Activated CD4-positive, alpha-beta memory T cell treated with anti-CD3 and anti-CD28 coated beads for 36 hours (primary cell): ENCODE measurements at regions of chr14 and their contacts with region 1.

Region 1: GRCh38 chr14:71403656-71404055 is 496.4 kb downstream of the PCNX1 start:
- DNase-seq: peak; percentile 35
- H3K4me3 Mint-ChIP-seq: no peak overlapping the region
- H3K27ac Mint-ChIP-seq: no peak overlapping the region
- H3K4me1 Mint-ChIP-seq: peaks cover 35% of the 10 kb centered on the region
- H3K27me3 Mint-ChIP-seq: no peaks in the 10 kb centered on the region

Region 2: DNA sequence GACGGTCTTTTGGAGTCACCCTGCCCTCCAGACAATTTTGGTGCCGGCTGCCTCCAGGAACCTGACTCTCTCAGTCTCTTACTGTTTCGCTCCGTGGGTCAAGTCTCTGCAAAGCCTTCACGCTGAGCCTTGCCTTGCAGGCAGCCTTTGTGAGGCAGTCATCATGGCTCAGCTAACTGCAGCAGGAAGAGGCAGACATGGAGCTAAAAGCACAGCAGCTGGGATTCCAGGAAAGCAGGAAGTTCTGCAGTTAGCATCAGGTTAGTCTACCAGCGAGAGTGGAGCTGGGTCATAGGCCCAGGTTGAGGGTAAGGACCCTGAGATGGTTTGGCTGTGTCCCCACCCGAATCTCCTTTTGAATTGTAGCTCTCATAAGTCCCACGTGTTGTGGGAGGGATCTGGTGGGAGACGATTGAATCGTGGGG is 191.0 kb before region 1 on chr14:
- CTCF ChIA-PET with region 1: no interaction called
- POLR2A ChIA-PET with region 1: no interaction called
- intact Hi-C with region 1: loop called (anchors 5 kb)
- DNase-seq: no peak
- H3K4me3 Mint-ChIP-seq: no peak overlapping the region
- H3K27ac Mint-ChIP-seq: no peak overlapping the region
- H3K4me1 Mint-ChIP-seq: peaks cover 14% of the 10 kb centered on the region
- H3K27me3 Mint-ChIP-seq: peaks cover 1% of the 10 kb centered on the region

Region 3: GRCh38 chr14:71267007-71267513 is 136.6 kb before region 1 on chr14:
- CTCF ChIA-PET with region 1: no interaction called
- POLR2A ChIA-PET with region 1: no interaction called
- intact Hi-C with region 1: loop called (anchors 10 kb)
- DNase-seq: peak; percentile 49
- H3K4me3 Mint-ChIP-seq: peak overlapping the region; percentile 48
- H3K27ac Mint-ChIP-seq: peak overlapping the region; percentile 77
- H3K4me1 Mint-ChIP-seq: peaks cover 37% of the 10 kb centered on the region
- H3K27me3 Mint-ChIP-seq: no peaks in the 10 kb centered on the region

Region 4: DNA sequence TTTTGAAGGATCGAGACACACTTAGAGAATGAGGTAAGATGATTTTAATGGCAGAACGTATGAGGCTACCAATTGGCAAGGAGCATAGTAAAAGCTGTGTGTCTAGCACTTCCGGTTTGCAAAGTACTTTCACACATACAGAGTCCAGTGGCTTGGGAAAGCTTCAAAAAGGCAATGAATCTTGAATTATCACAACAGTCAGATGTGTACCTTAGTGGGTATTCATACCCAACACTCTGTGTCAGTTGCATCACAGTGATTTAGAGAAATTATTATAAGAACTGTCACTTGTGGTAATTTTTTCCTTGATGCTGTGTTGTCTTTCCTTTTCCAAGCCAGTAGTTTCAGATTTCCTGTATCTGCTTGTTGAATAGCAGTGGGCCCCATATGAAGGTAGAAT is 72.3 kb before region 1 on chr14:
- CTCF ChIA-PET with region 1: interaction called, 6 read pairs
- POLR2A ChIA-PET with region 1: interaction called, 5 read pairs
- intact Hi-C with region 1: loop called (anchors 2 kb)
- DNase-seq: no peak
- H3K4me3 Mint-ChIP-seq: no peak overlapping the region
- H3K27ac Mint-ChIP-seq: peak overlapping the region; percentile 44
- H3K4me1 Mint-ChIP-seq: peaks cover 59% of the 10 kb centered on the region
- H3K27me3 Mint-ChIP-seq: no peaks in the 10 kb centered on the region

Region 5: GRCh38 chr14:71371711-71372396 is 31.8 kb before region 1 on chr14:
- CTCF ChIA-PET with region 1: interaction called, 3 read pairs
- POLR2A ChIA-PET with region 1: no interaction called
- intact Hi-C with region 1: loop called (anchors 2 kb)
- DNase-seq: no peak
- H3K4me3 Mint-ChIP-seq: no peak overlapping the region
- H3K27ac Mint-ChIP-seq: peak overlapping the region; percentile 2
- H3K4me1 Mint-ChIP-seq: peaks cover 20% of the 10 kb centered on the region
- H3K27me3 Mint-ChIP-seq: no peaks in the 10 kb centered on the region

Region 6: DNA sequence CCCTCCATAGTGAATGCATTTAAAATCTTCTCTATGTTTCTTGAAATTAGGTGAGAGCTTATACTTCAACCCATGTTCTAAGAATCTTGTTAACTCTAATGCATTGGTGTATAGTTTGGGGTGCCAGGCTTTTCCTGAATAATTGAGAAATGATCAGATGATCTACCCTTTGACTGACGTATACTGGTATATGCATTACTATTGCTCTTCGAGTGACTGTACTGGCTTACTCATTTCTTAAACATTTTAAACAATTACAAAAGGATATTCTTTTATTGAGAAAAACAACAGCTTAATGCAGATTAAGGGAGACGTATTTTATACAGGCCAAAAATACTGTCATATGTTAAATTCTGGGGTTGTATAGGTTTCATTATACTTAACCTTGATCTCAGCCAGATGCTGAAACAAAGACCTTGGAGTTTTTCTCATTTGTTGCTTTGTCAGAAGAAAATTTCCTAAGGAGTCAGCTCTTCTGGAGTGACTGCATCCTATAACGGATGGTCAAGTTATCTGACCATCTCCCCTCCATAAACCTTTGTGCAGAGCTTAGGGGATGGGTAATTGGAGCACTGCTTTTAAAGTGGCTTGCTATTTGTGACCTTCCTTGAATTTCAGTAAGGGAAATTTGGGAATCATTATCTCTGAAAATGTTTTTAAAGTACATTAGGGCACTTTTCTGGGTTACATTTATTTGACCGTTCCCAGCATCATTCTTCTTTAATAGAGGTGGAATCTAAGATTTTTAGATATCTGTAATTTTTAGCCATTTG is 11.2 kb after region 1 on chr14:
- CTCF ChIA-PET with region 1: interaction called, 4 read pairs
- POLR2A ChIA-PET with region 1: interaction called, 8 read pairs
- intact Hi-C with region 1: loop called (anchors 1 kb)
- DNase-seq: no peak
- H3K4me3 Mint-ChIP-seq: no peak overlapping the region
- H3K27ac Mint-ChIP-seq: no peak overlapping the region
- H3K4me1 Mint-ChIP-seq: peaks cover 30% of the 10 kb centered on the region
- H3K27me3 Mint-ChIP-seq: no peaks in the 10 kb centered on the region

Region 7: DNA sequence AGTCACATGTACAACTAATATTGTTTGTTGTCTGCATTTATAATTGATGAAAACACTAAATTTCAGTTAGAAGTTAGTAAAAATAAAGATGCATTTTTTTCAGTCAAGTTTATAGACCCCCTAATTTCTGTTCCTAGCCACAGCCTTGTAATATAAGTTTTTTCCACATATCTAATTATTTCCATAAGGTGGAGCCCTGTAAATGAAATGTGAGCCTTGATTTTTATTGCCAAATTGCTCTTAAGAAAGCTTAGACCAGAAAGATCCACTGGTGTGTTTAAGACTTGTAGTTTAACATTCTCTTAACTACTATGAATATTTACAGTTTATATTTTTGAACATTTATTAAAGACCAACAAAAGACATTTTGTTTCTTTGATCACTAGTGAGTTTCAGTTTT is 206.5 kb after region 1 on chr14:
- CTCF ChIA-PET with region 1: no interaction called
- POLR2A ChIA-PET with region 1: no interaction called
- intact Hi-C with region 1: no loop called
- DNase-seq: no peak
- H3K4me3 Mint-ChIP-seq: no peak overlapping the region
- H3K27ac Mint-ChIP-seq: no peak overlapping the region
- H3K4me1 Mint-ChIP-seq: peaks cover 22% of the 10 kb centered on the region
- H3K27me3 Mint-ChIP-seq: no peaks in the 10 kb centered on the region